ENCODE measurements at regions of chr3 and their contacts with region 1.

Region 1: GRCh38 chr3:122679085-122679881 is 1.4 kb upstream of the PARP14 start:
- DNase-seq: peak; percentile 85 to 91 (median 88)
- ATAC-seq: peak; percentile 78 to 79
- H3K4me3 ChIP-seq: peak overlapping the region; percentile 92
- H3K27ac ChIP-seq: peak overlapping the region; percentile 49
- H3K4me1 ChIP-seq: no peaks in the 10 kb centered on the region
- H3K27me3 ChIP-seq: no peaks in the 10 kb centered on the region

Region 2: GRCh38 chr3:122392868-122393844 is 286.1 kb before region 1 on chr3:
- intact Hi-C with region 1: loop called in 3 of 4 experiments (anchors 5 to 10 kb)
- DNase-seq: no peak
- ATAC-seq: no peak
- H3K4me3 ChIP-seq: no peak overlapping the region
- H3K27ac ChIP-seq: no peak overlapping the region
- H3K4me1 ChIP-seq: no peaks in the 10 kb centered on the region
- H3K27me3 ChIP-seq: no peaks in the 10 kb centered on the region

Region 3: GRCh38 chr3:122415720-122416654 is 263.3 kb before region 1 on chr3 and contains the start of gene WDR5B:
- intact Hi-C with region 1: loop called in 1 of 4 experiments (anchors 10 kb)
- DNase-seq: peak; percentile 97 to 98 (median 98)
- ATAC-seq: peak; percentile 97 to 98
- H3K4me3 ChIP-seq: peak within 1 kb of the TSS; percentile 97
- H3K27ac ChIP-seq: peak within 1 kb of the TSS; percentile 95
- H3K4me1 ChIP-seq: peaks cover 7% of the 10 kb centered on the region
- H3K27me3 ChIP-seq: no peaks in the 10 kb centered on the region
- total RNA-seq, gene WDR5B: 3.3 to 4.0 (median 3.8) TPM

Region 4: GRCh38 chr3:122458992-122459391 is 220.3 kb before region 1 on chr3:
- intact Hi-C with region 1: loop called in 1 of 4 experiments (anchors 5 kb)
- DNase-seq: no peak
- ATAC-seq: no peak
- H3K4me3 ChIP-seq: no peak overlapping the region
- H3K27ac ChIP-seq: no peak overlapping the region
- H3K4me1 ChIP-seq: no peaks in the 10 kb centered on the region
- H3K27me3 ChIP-seq: no peaks in the 10 kb centered on the region

Region 5: GRCh38 chr3:122564155-122564912 is 114.9 kb before region 1 on chr3 and contains the starts of genes DTX3L and PARP9:
- intact Hi-C with region 1: loop called (anchors 2 to 10 kb)
- DNase-seq: peak; percentile 88 to 93 (median 92)
- ATAC-seq: peak; percentile 99
- H3K4me3 ChIP-seq: peak within 1 kb of the TSS; percentile 89
- H3K27ac ChIP-seq: peak within 1 kb of the TSS; percentile 91
- H3K4me1 ChIP-seq: peaks cover 2% of the 10 kb centered on the region
- H3K27me3 ChIP-seq: no peaks in the 10 kb centered on the region
- total RNA-seq, gene DTX3L: 12.1 to 24.1 (median 13.6) TPM
- total RNA-seq, gene PARP9: 12.6 to 24.5 (median 14.4) TPM

Region 6: GRCh38 chr3:122598556-122598955 is 80.7 kb before region 1 on chr3:
- intact Hi-C with region 1: no loop called
- DNase-seq: no peak
- ATAC-seq: no peak
- H3K4me3 ChIP-seq: no peak overlapping the region
- H3K27ac ChIP-seq: no peak overlapping the region
- H3K4me1 ChIP-seq: no peaks in the 10 kb centered on the region
- H3K27me3 ChIP-seq: no peaks in the 10 kb centered on the region

Measured in right cardiac atrium (tissue), 5 donors.